ENCODE measurements at regions of chr2 and their contacts with region 1.

Region 1: DNA sequence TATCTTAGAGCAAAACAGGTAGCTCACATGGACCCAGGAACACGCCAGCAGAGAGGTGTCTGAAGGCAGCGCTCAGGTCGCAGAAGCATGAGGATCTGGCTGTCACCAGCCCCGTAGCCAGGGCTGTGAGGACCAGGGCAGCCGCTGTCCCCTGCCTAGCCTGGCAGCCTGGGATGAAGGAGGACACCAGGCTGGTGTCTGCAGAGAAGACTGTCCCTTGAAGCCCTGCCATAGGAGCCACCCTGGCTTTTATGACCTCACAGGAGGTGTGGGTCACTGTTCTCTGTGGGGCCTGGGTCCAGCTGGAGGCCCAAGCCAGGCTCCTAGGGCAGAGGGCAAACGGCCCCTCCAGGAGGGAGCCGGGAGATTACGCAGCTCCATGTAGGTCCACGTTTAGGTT is at the start of gene SPATA3:
- DNase-seq: no peak
- H3K4me3 ChIP-seq: no peak within 1 kb of the TSS
- H3K4me3 Mint-ChIP-seq: no peak within 1 kb of the TSS
- H3K27ac ChIP-seq: no peak within 1 kb of the TSS
- H3K27ac Mint-ChIP-seq: no peak within 1 kb of the TSS
- H3K4me1 ChIP-seq: no peaks in the 10 kb centered on the region
- H3K4me1 Mint-ChIP-seq: no peaks in the 10 kb centered on the region
- H3K27me3 ChIP-seq: peaks cover 1% of the 10 kb centered on the region
- H3K27me3 Mint-ChIP-seq: peaks cover 25 to 46% of the 10 kb centered on the region in 2 donors
- total RNA-seq, gene SPATA3: not detected

Region 2: GRCh38 chr2:230902180-230902899 is 93.5 kb before region 1 on chr2:
- CTCF ChIA-PET with region 1: interaction called, 12 read pairs
- POLR2A ChIA-PET with region 1: no interaction called
- intact Hi-C with region 1: no loop called
- DNase-seq: peak in 4 of 5 donors; percentile 33 to 54 (median 38)
- H3K4me3 ChIP-seq: no peak overlapping the region
- H3K4me3 Mint-ChIP-seq: no peak overlapping the region
- H3K27ac ChIP-seq: no peak overlapping the region
- H3K27ac Mint-ChIP-seq: no peak overlapping the region
- H3K4me1 ChIP-seq: peaks cover 17% of the 10 kb centered on the region
- H3K4me1 Mint-ChIP-seq: peaks cover 7 to 23% (median 18%) of the 10 kb centered on the region in 4 donors
- H3K27me3 ChIP-seq: no peaks in the 10 kb centered on the region
- H3K27me3 Mint-ChIP-seq: peaks cover 5 to 7% of the 10 kb centered on the region in 2 donors

Region 3: GRCh38 chr2:231563378-231563961 is 567.6 kb after region 1 on chr2:
- CTCF ChIA-PET with region 1: no interaction called
- POLR2A ChIA-PET with region 1: no interaction called
- intact Hi-C with region 1: no loop called
- DNase-seq: no peak
- H3K4me3 ChIP-seq: no peak overlapping the region
- H3K4me3 Mint-ChIP-seq: no peak overlapping the region
- H3K27ac ChIP-seq: no peak overlapping the region
- H3K27ac Mint-ChIP-seq: no peak overlapping the region
- H3K4me1 ChIP-seq: no peaks in the 10 kb centered on the region
- H3K4me1 Mint-ChIP-seq: no peaks in the 10 kb centered on the region
- H3K27me3 ChIP-seq: no peaks in the 10 kb centered on the region
- H3K27me3 Mint-ChIP-seq: no peaks in the 10 kb centered on the region

Measured in CD4-positive, alpha-beta memory T cell (primary cell).